Endothelial cell of umbilical vein (primary cell): ENCODE measurements at regions of chr18 and their contacts with region 1.

Region 1: DNA sequence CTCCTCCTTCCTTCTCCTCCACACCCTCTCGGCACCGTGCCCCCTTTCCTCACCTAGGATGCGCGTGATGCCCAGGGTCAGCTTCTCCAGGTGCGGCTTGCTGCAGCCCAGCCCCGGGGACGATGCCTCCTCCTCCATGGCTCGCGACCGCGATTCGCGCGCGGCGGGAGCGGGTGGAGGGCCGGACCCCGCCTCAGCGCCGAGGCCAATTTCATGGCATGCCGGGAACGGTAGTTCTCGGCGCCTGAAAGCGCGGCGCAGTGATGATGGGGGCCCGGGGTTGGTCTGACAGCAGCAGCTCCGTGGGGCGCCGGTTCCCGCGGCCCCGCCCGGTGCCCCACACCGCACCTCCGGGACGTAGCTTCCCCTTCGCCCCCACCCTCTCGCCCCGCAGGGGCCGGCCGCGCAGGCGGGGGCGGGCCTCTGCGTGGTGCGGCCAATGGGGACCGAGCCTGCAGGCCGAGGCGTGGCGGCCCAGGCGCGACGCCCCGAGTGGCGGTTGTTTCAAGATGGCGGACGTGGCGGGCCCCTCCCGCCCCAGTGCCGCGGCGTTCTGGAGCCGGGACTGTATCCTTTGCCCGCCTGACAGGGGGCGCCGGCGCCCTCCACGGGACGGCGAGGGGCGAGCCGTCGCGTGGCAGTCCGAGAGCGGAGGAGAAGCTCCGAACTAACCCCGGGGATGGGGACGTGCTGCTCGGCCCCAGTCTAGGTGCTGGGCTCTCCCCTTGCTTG is at the starts of genes KIAA1328 and TPGS2:
- DNase-seq: peak; percentile 91
- H3K4me3 ChIP-seq: peak within 1 kb of the TSS; percentile 72 to 97 (median 86)
- H3K27ac ChIP-seq: peak within 1 kb of the TSS; percentile 68
- H3K4me1 ChIP-seq: peaks cover 18% of the 10 kb centered on the region
- H3K27me3 ChIP-seq: no peaks in the 10 kb centered on the region
- CTCF ChIP-seq: peak; percentile 32 to 61
- POLR2A ChIP-seq: peak; percentile 9
- total RNA-seq, gene KIAA1328: 6.3 and 6.5 TPM in 2 replicates
- total RNA-seq, gene TPGS2: 148 and 150 TPM in 2 replicates

Region 2: DNA sequence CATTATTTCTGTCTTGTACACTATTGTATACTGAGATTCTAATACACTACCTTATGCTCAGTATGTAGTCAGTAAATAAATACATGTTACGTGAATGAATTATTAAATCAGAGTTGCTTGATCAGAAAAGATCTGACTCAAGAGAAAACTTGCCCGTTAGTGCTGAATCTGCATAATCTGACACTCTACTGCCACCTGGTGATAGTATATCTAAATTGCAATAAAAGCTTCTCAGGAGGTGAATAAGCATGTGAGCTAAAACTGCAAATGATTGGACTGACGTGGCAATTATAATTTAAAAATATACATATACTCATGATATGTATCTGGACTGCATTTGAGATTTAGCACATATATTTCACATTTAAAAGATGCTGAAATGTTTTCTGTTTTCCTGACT is 70.5 kb after region 1 on chr18:
- CTCF ChIA-PET with region 1: interaction called, 9 read pairs
- POLR2A ChIA-PET with region 1: no interaction called
- dilution Hi-C with region 1: no loop called
- intact Hi-C with region 1: loop called (anchors 1 kb)
- DNase-seq: no peak
- H3K4me3 ChIP-seq: no peak overlapping the region
- H3K27ac ChIP-seq: no peak overlapping the region
- H3K4me1 ChIP-seq: peaks cover 7% of the 10 kb centered on the region
- H3K27me3 ChIP-seq: no peaks in the 10 kb centered on the region
- CTCF ChIP-seq: peak; percentile 17 to 20
- POLR2A ChIP-seq: no peak